HAP-1 (cell line): ENCODE measurements at regions of chr22 and their contacts with region 1.

Region 1: GRCh38 chr22:33126881-33127280 is 68.7 kb upstream of the SYN3 start:
- DNase-seq: peak; percentile 37 to 41
- H3K4me3 ChIP-seq: no peak overlapping the region
- H3K4me1 ChIP-seq: no peaks in the 10 kb centered on the region
- H3K27me3 ChIP-seq: peaks cover 4% of the 10 kb centered on the region; the same call in 1 of the 2 replicates

Region 2: GRCh38 chr22:33018232-33018864 is 108.5 kb before region 1 on chr22:
- in situ Hi-C with region 1: loop called (anchors 10 kb)
- DNase-seq: peak; percentile 55 to 86
- H3K4me3 ChIP-seq: no peak overlapping the region
- H3K4me1 ChIP-seq: peaks cover 9% of the 10 kb centered on the region; the same call in 1 of the 2 replicates
- H3K27me3 ChIP-seq: no peaks in the 10 kb centered on the region

Region 3: GRCh38 chr22:33188326-33188725 is 61.4 kb after region 1 on chr22:
- in situ Hi-C with region 1: loop called (anchors 10 kb)
- DNase-seq: no peak
- H3K4me3 ChIP-seq: no peak overlapping the region
- H3K4me1 ChIP-seq: no peaks in the 10 kb centered on the region
- H3K27me3 ChIP-seq: peaks cover 2% of the 10 kb centered on the region

Region 4: GRCh38 chr22:34966980-34967565 is 1840.2 kb after region 1 on chr22:
- in situ Hi-C with region 1: no loop called
- DNase-seq: no peak
- H3K4me3 ChIP-seq: no peak overlapping the region
- H3K4me1 ChIP-seq: no peaks in the 10 kb centered on the region
- H3K27me3 ChIP-seq: no peaks in the 10 kb centered on the region